PC-9 (cell line): ENCODE measurements at regions of chr10 and their contacts with region 1.

Region 1: GRCh38 chr10:29630205-29631048 is 4.3 kb downstream of the SVIL start:
- DNase-seq: peak; percentile 55 to 98
- H3K4me3 ChIP-seq: peak overlapping the region; percentile 35; the same call in 1 of the 2 replicates
- H3K27ac ChIP-seq: peak overlapping the region; percentile 98
- H3K4me1 ChIP-seq: peaks cover 81% of the 10 kb centered on the region
- H3K27me3 ChIP-seq: no peaks in the 10 kb centered on the region
- CTCF ChIP-seq: no peak

Region 2: GRCh38 chr10:29658984-29659965 is 28.8 kb after region 1 on chr10:
- CTCF ChIA-PET with region 1: no interaction called
- POLR2A ChIA-PET with region 1: no interaction called
- intact Hi-C with region 1: loop called (anchors 1 kb)
- DNase-seq: peak; percentile 87 to 97
- H3K4me3 ChIP-seq: no peak overlapping the region
- H3K27ac ChIP-seq: peak overlapping the region; percentile 76
- H3K4me1 ChIP-seq: peaks cover 51% of the 10 kb centered on the region
- H3K27me3 ChIP-seq: no peaks in the 10 kb centered on the region
- CTCF ChIP-seq: peak; percentile 45; the same call in 1 of the 2 replicates

Region 3: DNA sequence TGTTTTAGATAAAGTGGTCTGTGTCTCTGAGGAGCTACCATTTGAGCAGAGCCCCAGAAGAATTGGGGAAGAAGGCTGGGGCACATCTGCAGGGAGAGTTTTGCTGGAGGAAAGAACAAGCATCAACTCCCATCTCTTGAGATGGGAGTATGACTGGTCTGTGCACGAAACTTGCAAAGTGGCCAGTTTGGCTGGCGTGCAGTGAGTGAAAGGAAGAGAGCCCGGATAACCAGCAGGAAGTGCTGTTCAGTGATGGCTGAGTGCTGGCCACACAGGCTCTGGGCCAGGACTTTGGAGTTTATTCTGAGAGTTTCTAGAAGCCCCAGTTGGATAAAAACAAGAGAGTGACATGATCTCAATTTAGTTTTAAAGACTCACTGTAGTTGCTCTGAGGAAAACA is 38.7 kb after region 1 on chr10:
- CTCF ChIA-PET with region 1: no interaction called
- POLR2A ChIA-PET with region 1: no interaction called
- intact Hi-C with region 1: loop called (anchors 1 kb)
- DNase-seq: no peak
- H3K4me3 ChIP-seq: no peak overlapping the region
- H3K27ac ChIP-seq: peak overlapping the region; percentile 62
- H3K4me1 ChIP-seq: peaks cover 29% of the 10 kb centered on the region
- H3K27me3 ChIP-seq: no peaks in the 10 kb centered on the region
- CTCF ChIP-seq: no peak

Region 4: DNA sequence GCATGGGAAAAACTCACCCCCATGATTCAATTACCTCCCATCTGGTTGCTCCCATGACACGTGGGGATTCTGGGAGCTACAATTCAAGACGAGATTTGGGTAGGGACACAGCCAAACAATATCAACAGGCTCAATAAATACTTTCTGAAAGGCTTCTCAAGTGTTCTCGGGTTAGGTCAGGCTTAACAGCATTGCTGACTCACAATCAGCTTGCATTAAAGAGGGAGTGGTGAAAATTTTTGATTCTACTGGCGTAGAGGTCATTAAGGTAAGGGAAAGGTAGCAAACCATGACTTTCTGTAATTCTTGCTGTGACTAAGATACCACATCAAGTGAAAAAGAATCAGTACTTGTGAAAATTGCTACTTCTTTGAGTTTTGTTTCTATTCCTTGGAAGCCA is 302.6 kb after region 1 on chr10:
- CTCF ChIA-PET with region 1: no interaction called
- POLR2A ChIA-PET with region 1: no interaction called
- intact Hi-C with region 1: no loop called
- DNase-seq: peak in 1 of 2 experiments; percentile 58
- H3K4me3 ChIP-seq: no peak overlapping the region
- H3K27ac ChIP-seq: peak overlapping the region; percentile 56
- H3K4me1 ChIP-seq: 0 out of 2 replicates have a peak, but pooled peaks cover 5% of the 10 kb centered on the region
- H3K27me3 ChIP-seq: no peaks in the 10 kb centered on the region
- CTCF ChIP-seq: no peak